SK-N-SH (cell line): ENCODE measurements at regions of chr3 and their contacts with region 1.

Region 1: GRCh38 chr3:22887664-22888291 is 315.3 kb upstream of the UBE2E2 start:
- DNase-seq: no peak
- H3K4me3 ChIP-seq: no peak overlapping the region
- H3K27ac ChIP-seq: no peak overlapping the region
- H3K4me1 ChIP-seq: no peaks in the 10 kb centered on the region
- H3K27me3 ChIP-seq: no peaks in the 10 kb centered on the region
- CTCF ChIP-seq: peak; percentile 69
- EP300 ChIP-seq: no peak
- RAD21 ChIP-seq: peak; percentile 71

Region 2: DNA sequence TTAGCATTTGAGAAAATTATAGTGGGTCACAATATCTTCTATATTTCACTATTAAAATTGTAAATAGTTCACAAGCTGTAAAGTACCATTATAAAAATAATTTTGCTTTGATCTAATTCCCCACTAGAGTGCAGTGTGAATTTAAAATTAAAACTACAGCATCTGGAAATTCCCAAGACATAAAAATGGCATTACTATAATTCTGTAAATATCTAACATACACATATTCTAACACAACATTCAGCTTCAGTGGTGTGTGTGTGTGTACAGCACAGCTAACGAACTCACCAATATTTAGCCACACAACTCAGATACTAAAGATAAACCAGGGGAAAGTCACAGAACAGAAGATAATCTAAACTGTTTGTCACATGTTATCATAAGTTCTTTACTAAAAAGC is 711.8 kb before region 1 on chr3:
- CTCF ChIA-PET with region 1: interaction called, 33 read pairs
- POLR2A ChIA-PET with region 1: no interaction called
- DNase-seq: peak; percentile 11
- H3K4me3 ChIP-seq: no peak overlapping the region
- H3K27ac ChIP-seq: peak overlapping the region in 1 of 2 experiments; percentile 60; a peak in 2 of 4 replicates
- H3K4me1 ChIP-seq: no peaks in the 10 kb centered on the region; a peak in 2 of 4 replicates
- H3K27me3 ChIP-seq: no peaks in the 10 kb centered on the region
- CTCF ChIP-seq: peak; percentile 59
- EP300 ChIP-seq: no peak
- RAD21 ChIP-seq: peak; percentile 73

Region 3: DNA sequence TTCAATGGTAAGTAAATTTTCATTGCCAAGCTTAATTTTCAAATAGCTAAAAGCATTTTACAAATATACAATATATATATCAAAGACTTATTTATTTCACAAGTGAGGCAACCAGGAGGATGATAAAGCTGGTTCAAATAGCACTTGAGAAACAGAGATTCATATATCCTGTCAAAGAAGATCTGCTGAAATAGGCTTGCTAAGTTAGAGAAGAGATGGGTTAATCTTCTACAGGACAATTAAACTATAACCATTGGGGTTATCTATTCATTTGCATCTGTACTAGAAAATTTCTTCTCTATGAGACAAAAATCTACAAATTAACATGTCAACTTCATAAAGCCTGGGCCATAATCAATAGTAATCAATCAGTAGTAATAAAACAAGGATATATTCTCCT is 322.4 kb before region 1 on chr3:
- CTCF ChIA-PET with region 1: interaction called, 12 read pairs
- POLR2A ChIA-PET with region 1: no interaction called
- DNase-seq: no peak
- H3K4me3 ChIP-seq: no peak overlapping the region
- H3K27ac ChIP-seq: no peak overlapping the region
- H3K4me1 ChIP-seq: no peaks in the 10 kb centered on the region
- H3K27me3 ChIP-seq: no peaks in the 10 kb centered on the region
- CTCF ChIP-seq: no peak
- EP300 ChIP-seq: no peak
- RAD21 ChIP-seq: no peak

Region 4: GRCh38 chr3:22922317-22922716 is 34.5 kb after region 1 on chr3:
- CTCF ChIA-PET with region 1: interaction called, 10 read pairs
- POLR2A ChIA-PET with region 1: no interaction called
- DNase-seq: peak; percentile 8
- H3K4me3 ChIP-seq: no peak overlapping the region
- H3K27ac ChIP-seq: no peak overlapping the region
- H3K4me1 ChIP-seq: no peaks in the 10 kb centered on the region
- H3K27me3 ChIP-seq: no peaks in the 10 kb centered on the region
- CTCF ChIP-seq: peak; percentile 53
- EP300 ChIP-seq: no peak
- RAD21 ChIP-seq: peak; percentile 37; the same call in 1 of the 2 replicates

Region 5: GRCh38 chr3:23071758-23072157 is 184.0 kb after region 1 on chr3:
- CTCF ChIA-PET with region 1: no interaction called
- POLR2A ChIA-PET with region 1: no interaction called
- DNase-seq: no peak
- H3K4me3 ChIP-seq: no peak overlapping the region
- H3K27ac ChIP-seq: no peak overlapping the region
- H3K4me1 ChIP-seq: no peaks in the 10 kb centered on the region; a peak in 1 of 4 replicates
- H3K27me3 ChIP-seq: no peaks in the 10 kb centered on the region
- CTCF ChIP-seq: no peak
- EP300 ChIP-seq: no peak
- RAD21 ChIP-seq: no peak